MCF 10A (cell line): ENCODE measurements at regions of chr10 and their contacts with region 1.

Region 1: DNA sequence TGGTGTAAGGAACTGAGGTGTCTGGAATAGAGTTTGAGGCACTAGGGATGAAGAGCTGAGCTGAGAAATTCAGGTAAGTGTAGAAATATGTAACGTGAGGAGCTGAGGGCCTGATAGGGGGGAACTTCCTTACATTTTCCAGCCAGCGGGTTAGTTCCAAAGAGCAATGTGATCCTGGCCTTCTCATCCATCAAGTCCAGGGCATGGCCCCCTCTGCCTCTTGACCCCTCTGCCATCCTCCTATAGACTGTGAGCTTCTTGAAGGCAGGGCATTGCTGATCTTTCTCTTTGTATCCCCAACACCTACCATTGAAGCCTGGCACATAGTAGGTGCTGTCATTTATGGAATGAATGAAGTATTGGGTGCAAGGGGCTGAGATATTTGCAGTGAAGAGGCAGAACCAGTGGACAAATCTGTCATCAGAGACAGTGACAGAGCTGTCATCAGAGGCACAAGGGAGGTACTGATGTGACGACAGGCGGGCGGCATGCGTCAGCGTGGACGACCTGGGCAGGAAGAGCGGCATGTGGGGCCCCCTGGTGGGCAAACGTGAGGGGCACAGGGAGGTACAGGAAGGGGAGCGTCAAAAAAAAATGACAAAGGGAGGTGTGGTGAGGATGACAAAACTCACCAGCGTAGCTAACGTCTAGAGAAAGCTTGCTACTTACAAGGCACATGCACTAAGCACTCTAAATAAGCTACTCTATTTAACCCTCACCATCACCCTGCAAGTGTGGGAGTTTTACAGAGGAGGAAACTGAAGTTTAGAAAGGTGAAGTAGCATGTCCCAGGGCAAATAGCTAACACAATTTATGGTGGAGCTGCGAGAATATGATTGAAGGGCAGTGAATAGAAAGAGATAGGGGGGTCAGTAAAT is 5.2 kb upstream of the CAMK2G start:
- DNase-seq: peak; percentile 87
- H3K4me3 Mint-ChIP-seq: no peak overlapping the region
- H3K27ac Mint-ChIP-seq: no peak overlapping the region
- H3K4me1 Mint-ChIP-seq: peaks cover 27% of the 10 kb centered on the region
- H3K27me3 Mint-ChIP-seq: no peaks in the 10 kb centered on the region
- CTCF ChIP-seq: peak; percentile 87

Region 2: GRCh38 chr10:73232887-73233286 is 646.6 kb before region 1 on chr10:
- CTCF ChIA-PET with region 1: no interaction called
- POLR2A ChIA-PET with region 1: no interaction called
- intact Hi-C with region 1: no loop called
- DNase-seq: peak; percentile 6
- H3K4me3 Mint-ChIP-seq: no peak overlapping the region
- H3K27ac Mint-ChIP-seq: no peak overlapping the region
- H3K4me1 Mint-ChIP-seq: no peaks in the 10 kb centered on the region
- H3K27me3 Mint-ChIP-seq: no peaks in the 10 kb centered on the region
- CTCF ChIP-seq: no peak

Region 3: DNA sequence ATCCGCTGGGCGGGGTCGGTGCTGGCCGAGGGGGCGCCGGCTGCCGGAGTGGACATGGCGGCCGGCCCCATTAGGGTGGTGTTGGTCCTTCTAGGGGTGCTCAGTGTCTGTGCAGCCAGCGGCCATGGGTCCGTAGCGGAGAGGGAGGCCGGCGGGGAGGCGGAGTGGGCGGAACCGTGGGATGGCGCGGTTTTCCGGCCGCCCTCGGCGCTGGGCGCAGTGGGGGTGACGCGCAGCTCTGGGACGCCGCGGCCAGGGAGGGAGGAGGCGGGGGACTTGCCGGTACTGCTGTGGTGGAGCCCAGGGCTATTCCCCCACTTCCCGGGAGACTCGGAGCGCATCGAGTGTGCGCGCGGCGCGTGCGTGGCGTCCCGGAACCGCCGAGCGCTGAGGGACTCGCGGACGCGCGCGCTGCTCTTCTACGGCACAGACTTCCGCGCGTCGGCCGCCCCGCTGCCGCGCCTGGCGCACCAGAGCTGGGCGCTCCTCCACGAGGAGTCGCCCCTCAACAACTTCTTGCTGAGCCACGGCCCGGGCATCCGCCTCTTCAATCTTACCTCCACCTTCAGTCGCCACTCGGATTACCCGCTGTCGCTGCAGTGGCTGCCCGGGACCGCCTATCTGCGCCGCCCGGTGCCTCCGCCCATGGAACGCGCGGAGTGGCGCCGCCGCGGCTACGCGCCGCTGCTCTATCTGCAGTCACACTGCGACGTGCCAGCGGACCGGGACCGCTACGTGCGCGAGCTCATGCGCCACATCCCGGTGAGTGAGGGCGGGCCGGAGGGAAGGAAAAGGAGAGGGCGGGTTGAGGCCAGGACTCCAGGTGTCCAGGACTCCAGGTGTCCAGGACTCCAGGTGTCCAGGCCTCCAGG is 107.0 kb before region 1 on chr10:
- CTCF ChIA-PET with region 1: interaction called, 5 read pairs
- POLR2A ChIA-PET with region 1: interaction called, 3 read pairs
- intact Hi-C with region 1: loop called (anchors 1 kb)
- DNase-seq: peak; percentile 73
- H3K4me3 Mint-ChIP-seq: peak overlapping the region; percentile 92
- H3K27ac Mint-ChIP-seq: peak overlapping the region; percentile 79
- H3K4me1 Mint-ChIP-seq: peaks cover 31% of the 10 kb centered on the region
- H3K27me3 Mint-ChIP-seq: no peaks in the 10 kb centered on the region
- CTCF ChIP-seq: no peak

Region 4: GRCh38 chr10:73810735-73811465 is 68.6 kb before region 1 on chr10:
- CTCF ChIA-PET with region 1: interaction called, 4 read pairs
- POLR2A ChIA-PET with region 1: interaction called, 4 read pairs
- intact Hi-C with region 1: loop called (anchors 2 kb)
- DNase-seq: no peak
- H3K4me3 Mint-ChIP-seq: peak overlapping the region; percentile 72
- H3K27ac Mint-ChIP-seq: peak overlapping the region; percentile 19
- H3K4me1 Mint-ChIP-seq: peaks cover 14% of the 10 kb centered on the region
- H3K27me3 Mint-ChIP-seq: no peaks in the 10 kb centered on the region
- CTCF ChIP-seq: no peak

Region 5: DNA sequence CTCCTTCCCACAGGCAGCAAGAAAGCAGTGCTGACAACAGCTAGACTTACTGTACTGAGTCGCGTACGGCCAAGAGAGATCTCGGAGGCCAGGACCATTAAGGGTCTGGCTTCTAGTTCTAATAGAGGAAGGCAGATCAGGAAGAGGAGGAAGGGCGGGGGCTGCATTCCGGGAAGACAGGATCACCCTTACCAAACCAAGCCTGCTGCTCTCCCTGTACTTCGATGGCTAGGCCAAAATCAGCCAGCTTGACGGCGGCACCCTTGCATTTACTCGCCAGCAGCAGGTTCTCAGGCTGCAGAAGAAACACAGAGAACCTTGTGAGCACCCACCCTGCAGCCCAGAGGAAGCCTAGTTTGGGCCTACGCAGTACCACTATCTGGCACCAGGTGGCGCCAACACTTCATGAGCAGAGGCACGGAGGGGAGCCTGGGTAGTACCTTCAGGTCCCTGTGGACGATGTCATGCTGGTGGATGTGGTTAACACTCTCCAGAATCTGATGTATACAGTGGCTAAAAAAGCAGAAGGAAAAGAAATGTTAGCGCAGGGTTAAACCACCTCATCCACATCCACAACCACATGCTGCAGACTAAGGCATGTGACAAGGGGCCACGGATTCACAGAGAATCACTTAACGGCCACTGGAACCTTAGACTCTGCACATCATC is 30.6 kb before region 1 on chr10:
- CTCF ChIA-PET with region 1: interaction called, 98 read pairs
- POLR2A ChIA-PET with region 1: interaction called, 6 read pairs
- intact Hi-C with region 1: loop called (anchors 1 kb)
- DNase-seq: peak; percentile 79
- H3K4me3 Mint-ChIP-seq: no peak overlapping the region
- H3K27ac Mint-ChIP-seq: no peak overlapping the region
- H3K4me1 Mint-ChIP-seq: no peaks in the 10 kb centered on the region
- H3K27me3 Mint-ChIP-seq: no peaks in the 10 kb centered on the region
- CTCF ChIP-seq: peak; percentile 98

Region 6: DNA sequence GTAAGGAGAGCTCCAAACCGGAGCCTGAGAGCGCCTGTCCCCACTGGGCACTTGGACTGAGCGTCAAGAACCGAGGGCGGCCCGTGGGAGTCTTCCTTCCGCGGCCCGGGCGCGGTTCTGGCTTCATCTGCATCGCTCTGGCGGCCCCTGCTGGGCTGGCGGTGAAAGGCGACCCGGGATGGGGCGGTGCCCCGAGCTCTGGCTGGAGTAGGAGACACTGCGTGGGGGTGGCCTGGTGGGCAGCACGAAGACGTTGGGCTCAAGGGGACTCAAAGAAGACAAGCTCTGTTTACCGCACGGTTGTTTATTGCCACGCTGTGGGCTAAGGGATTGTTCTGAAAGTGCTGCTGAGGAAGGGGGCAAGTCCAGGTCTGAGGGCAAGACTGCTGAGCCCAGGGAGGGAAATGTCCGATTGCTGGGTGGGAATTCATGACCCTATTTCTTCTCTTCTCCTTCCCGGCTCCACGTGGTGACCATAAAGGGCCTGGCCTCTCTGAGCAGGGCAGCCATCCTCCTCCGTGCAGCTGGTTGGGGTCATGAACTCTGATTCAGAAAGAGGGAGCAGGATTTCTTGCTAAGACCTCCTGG is 61.2 kb after region 1 on chr10:
- CTCF ChIA-PET with region 1: interaction called, 658 read pairs
- POLR2A ChIA-PET with region 1: interaction called, 361 read pairs
- intact Hi-C with region 1: no loop called
- DNase-seq: peak; percentile 74
- H3K4me3 Mint-ChIP-seq: no peak overlapping the region
- H3K27ac Mint-ChIP-seq: peak overlapping the region; percentile 72
- H3K4me1 Mint-ChIP-seq: peaks cover 31% of the 10 kb centered on the region
- H3K27me3 Mint-ChIP-seq: no peaks in the 10 kb centered on the region
- CTCF ChIP-seq: peak; percentile 95